ENCODE measurements at regions of chr1 and their contacts with region 1.

Region 1: GRCh38 chr1:76682138-76682537 is 185.1 kb upstream of the ST6GALNAC5 start:
- DNase-seq: no peak
- H3K4me3 ChIP-seq: no peak overlapping the region
- H3K27ac ChIP-seq: no peak overlapping the region
- H3K4me1 ChIP-seq: no peaks in the 10 kb centered on the region
- H3K27me3 ChIP-seq: no peaks in the 10 kb centered on the region
- CTCF ChIP-seq: peak in 1 of 2 donors; percentile 7

Region 2: DNA sequence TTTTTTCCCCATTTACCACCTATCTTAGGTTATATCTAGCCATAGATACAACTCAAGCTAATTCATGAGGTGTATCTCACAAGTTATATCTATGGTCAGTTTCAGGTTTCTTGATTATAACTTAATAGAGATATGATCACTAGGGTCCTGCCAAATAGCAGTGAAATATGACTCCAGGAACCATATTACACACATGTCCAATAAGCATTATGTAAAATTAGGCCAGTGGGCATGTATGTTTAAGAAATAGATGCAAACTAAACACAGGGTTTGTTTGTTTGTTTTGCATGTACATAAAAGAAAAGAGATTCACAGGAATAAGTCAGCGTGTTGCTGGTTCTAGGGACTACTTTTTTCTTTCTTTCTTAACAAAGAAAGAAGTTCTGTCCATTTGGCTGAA is 72.6 kb after region 1 on chr1:
- CTCF ChIA-PET with region 1: interaction called, 12 read pairs
- dilution Hi-C with region 1: no loop called
- in situ Hi-C with region 1: no loop called
- intact Hi-C with region 1: no loop called
- DNase-seq: no peak
- H3K4me3 ChIP-seq: no peak overlapping the region
- H3K27ac ChIP-seq: no peak overlapping the region
- H3K4me1 ChIP-seq: no peaks in the 10 kb centered on the region
- H3K27me3 ChIP-seq: peaks cover 6% of the 10 kb centered on the region
- CTCF ChIP-seq: no peak